Activated T-helper 1 cell treated with anti-CD3 and anti-CD28 coated beads, Interleukin-12 subunit alpha, Interleukin-12 subunit beta, Interleukin-2, Interleukin-4 antibody, amounts not matched to agents 30 ng/mL and 10 ng/mL and 1 ng/mL, durations not matched to agents 14 hours and 24 hours and 36 hours (primary cell): ENCODE measurements at regions of chr6 and their contacts with region 1.

Region 1: GRCh38 chr6:158026054-158026900 is 44.6 kb downstream of the SYNJ2 start:
- DNase-seq: peak; percentile 76
- H3K4me3 Mint-ChIP-seq: peak overlapping the region; percentile 81
- H3K27ac Mint-ChIP-seq: peak overlapping the region; percentile 99
- H3K4me1 Mint-ChIP-seq: peaks cover 43% of the 10 kb centered on the region
- H3K27me3 Mint-ChIP-seq: no peaks in the 10 kb centered on the region

Region 2: GRCh38 chr6:157823528-157824370 is 202.5 kb before region 1 on chr6:
- intact Hi-C with region 1: loop called (anchors 1 kb)
- DNase-seq: peak; percentile 72
- H3K4me3 Mint-ChIP-seq: peak overlapping the region; percentile 93
- H3K27ac Mint-ChIP-seq: peak overlapping the region; percentile 97
- H3K4me1 Mint-ChIP-seq: peaks cover 47% of the 10 kb centered on the region
- H3K27me3 Mint-ChIP-seq: peaks cover 34% of the 10 kb centered on the region

Region 3: GRCh38 chr6:157981395-157982296 is 44.6 kb before region 1 on chr6 and contains the start of gene SYNJ2:
- intact Hi-C with region 1: loop called (anchors 1 kb)
- DNase-seq: peak; percentile 85
- H3K4me3 Mint-ChIP-seq: peak within 1 kb of the TSS; percentile 95
- H3K27ac Mint-ChIP-seq: peak within 1 kb of the TSS; percentile 84
- H3K4me1 Mint-ChIP-seq: peaks cover 49% of the 10 kb centered on the region
- H3K27me3 Mint-ChIP-seq: peaks cover 10% of the 10 kb centered on the region
- total RNA-seq, gene SYNJ2: 29.0 and 31.2 TPM in 2 replicates

Region 4: GRCh38 chr6:158009114-158009891 is 17.0 kb before region 1 on chr6:
- intact Hi-C with region 1: loop called (anchors 1 kb)
- DNase-seq: no peak
- H3K4me3 Mint-ChIP-seq: peak overlapping the region; percentile 53
- H3K27ac Mint-ChIP-seq: peak overlapping the region; percentile 64
- H3K4me1 Mint-ChIP-seq: peaks cover 73% of the 10 kb centered on the region
- H3K27me3 Mint-ChIP-seq: no peaks in the 10 kb centered on the region

Region 5: DNA sequence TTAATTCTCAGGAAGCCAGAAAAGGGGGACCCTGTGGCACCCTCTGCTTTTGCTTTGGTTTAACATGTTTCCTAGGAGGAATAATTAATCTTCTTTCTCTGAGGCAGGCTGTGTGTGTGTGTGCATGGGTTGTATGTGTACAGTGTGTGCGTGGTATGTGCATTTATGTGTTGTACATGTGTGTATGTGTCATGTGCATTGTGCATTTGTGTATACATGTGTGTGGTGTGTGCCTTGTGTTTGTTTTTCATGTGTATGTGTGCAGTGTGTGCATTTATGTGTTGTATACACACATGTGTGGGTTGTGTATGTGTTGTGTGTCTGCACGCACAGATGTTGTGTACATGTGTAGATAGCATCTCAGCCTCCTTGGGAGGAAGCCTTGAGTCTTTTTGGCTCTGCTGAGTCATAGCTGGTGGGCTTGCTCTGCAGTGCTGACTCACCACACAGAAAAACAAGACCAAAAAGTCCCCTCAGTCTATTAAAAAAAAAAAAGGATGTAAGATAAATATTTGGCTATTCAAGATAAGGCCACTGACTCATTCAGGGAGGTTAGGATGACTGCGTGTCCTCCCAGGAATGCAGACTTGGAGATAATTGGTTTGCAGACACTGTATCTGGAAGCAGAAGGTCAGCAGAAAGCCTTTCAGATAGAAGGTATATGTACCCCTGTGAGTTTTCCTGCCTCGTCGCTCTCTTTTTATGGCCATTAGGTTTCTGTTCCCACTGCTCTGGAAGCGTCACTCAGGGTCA is 13.9 kb after region 1 on chr6:
- intact Hi-C with region 1: no loop called
- DNase-seq: peak; percentile 31
- H3K4me3 Mint-ChIP-seq: peak overlapping the region; percentile 66
- H3K27ac Mint-ChIP-seq: peak overlapping the region; percentile 88
- H3K4me1 Mint-ChIP-seq: peaks cover 40% of the 10 kb centered on the region
- H3K27me3 Mint-ChIP-seq: no peaks in the 10 kb centered on the region

Region 6: GRCh38 chr6:158072083-158072721 is 45.9 kb after region 1 on chr6:
- intact Hi-C with region 1: loop called (anchors 1 kb)
- DNase-seq: peak; percentile 60
- H3K4me3 Mint-ChIP-seq: no peak overlapping the region
- H3K27ac Mint-ChIP-seq: peak overlapping the region; percentile 70
- H3K4me1 Mint-ChIP-seq: peaks cover 55% of the 10 kb centered on the region
- H3K27me3 Mint-ChIP-seq: no peaks in the 10 kb centered on the region